ENCODE measurements at regions of chr10 and their contacts with region 1.

Region 1: DNA sequence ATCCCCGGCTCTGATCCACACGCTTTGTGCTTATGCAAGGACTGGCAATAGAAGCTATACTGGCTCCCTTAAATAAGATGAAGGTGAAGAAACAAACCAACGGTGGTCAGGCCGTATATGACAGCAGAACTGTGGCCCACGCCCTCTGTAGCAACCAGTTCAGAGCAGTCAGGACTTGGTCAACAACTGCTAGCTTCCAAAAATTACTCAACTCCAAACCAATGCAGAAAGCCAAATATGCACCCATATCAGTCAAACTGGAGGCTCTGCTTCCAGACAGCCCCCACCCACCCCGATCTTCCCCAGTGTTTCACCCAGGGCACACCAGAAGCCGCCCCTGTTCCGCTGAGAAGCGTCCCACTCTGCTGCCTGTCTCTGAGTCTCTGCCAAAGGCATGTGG is 222.3 kb upstream of the MGMT start:
- DNase-seq: no peak
- H3K4me3 ChIP-seq: no peak overlapping the region
- H3K27ac ChIP-seq: no peak overlapping the region
- H3K4me1 ChIP-seq: no peaks in the 10 kb centered on the region
- H3K27me3 ChIP-seq: peaks cover 0 to 3% of the 10 kb centered on the region in 2 donors
- CTCF ChIP-seq: no peak

Region 2: DNA sequence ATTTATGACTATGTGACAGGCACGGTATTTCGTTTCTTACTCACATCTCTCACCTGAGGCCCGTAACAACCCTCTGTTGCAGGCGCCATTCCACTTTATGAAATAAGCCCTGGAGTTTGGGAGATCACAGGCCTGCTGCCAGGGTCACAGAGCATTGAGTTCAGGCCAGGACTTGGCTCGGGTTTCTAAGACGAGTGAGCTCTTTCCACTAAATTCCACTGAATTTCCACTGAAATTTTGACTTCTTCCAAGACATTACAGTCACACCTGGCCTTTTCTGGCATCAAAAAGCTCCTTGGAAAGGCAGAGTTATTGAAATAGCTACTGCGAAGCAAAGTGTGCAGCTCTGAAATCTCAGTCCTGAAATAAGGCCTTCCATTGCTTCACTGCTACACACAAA is 60.6 kb before region 1 on chr10:
- intact Hi-C with region 1: no loop called
- DNase-seq: no peak
- H3K4me3 ChIP-seq: no peak overlapping the region
- H3K27ac ChIP-seq: no peak overlapping the region
- H3K4me1 ChIP-seq: no peaks in the 10 kb centered on the region
- H3K27me3 ChIP-seq: no peaks in the 10 kb centered on the region
- CTCF ChIP-seq: no peak

Region 3: GRCh38 chr10:129495698-129496097 is 250.9 kb after region 1 on chr10:
- intact Hi-C with region 1: loop called (anchors 5 kb)
- DNase-seq: no peak
- H3K4me3 ChIP-seq: no peak overlapping the region
- H3K27ac ChIP-seq: no peak overlapping the region
- H3K4me1 ChIP-seq: no peaks in the 10 kb centered on the region
- H3K27me3 ChIP-seq: no peaks in the 10 kb centered on the region
- CTCF ChIP-seq: no peak